GM12878 (cell line): ENCODE measurements at regions of chr3 and their contacts with region 1.

Region 1: DNA sequence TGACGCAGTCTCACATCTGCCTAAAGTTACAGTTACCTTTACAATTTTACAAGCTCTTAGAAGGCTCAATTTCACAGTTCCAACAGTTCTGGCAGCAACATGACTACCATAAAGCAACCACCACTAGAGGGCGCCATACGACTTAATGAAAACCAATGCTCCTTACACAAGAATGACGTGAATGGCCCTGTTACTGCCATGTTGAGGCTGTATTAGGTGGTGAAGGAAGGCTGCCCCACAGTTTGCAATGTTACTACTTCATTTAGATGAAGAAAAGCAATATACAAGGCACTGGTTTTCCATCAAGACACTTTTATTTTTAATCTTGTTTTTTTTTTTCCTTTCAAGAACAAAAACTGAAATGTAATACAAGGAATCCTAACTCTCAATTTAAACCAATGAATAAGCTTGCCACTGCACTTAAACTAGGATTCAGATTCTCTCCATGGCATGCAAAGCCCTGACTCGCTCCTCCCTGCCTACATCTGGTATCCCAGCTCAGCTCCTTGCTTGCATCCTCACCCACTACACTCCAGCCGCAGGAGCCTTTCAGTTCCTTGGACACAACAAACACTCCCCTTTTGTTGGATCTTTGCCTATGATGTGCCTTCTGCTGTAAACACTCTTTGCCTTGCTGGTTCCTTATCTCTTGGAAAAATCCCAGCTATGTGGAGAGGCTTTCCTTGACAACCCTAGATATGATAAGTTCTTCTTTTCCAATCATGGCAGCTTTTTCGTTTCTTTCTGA is 270.7 kb downstream of the GBE1 start:
- DNase-seq: peak; percentile 36
- ATAC-seq: peak; percentile 99
- H3K4me3 ChIP-seq: no peak overlapping the region
- H3K27ac ChIP-seq: no peak overlapping the region
- H3K4me1 ChIP-seq: peaks cover 3% of the 10 kb centered on the region
- H3K27me3 ChIP-seq: no peaks in the 10 kb centered on the region
- CTCF ChIP-seq: peak; percentile 69 to 76 (median 73)
- EP300 ChIP-seq: no peak
- POLR2A ChIP-seq: no peak
- RAD21 ChIP-seq: peak; percentile 74

Region 2: GRCh38 chr3:81476692-81477091 is 14.0 kb before region 1 on chr3:
- CTCF ChIA-PET with region 1: interaction called, 30 read pairs
- POLR2A ChIA-PET with region 1: no interaction called
- RAD21 ChIA-PET with region 1: no interaction called
- SMC1A ChIA-PET with region 1: interaction called, 10 read pairs
- in situ Hi-C with region 1: no loop called
- intact Hi-C with region 1: no loop called
- DNase-seq: no peak
- ATAC-seq: no peak
- H3K4me3 ChIP-seq: no peak overlapping the region
- H3K27ac ChIP-seq: no peak overlapping the region
- H3K4me1 ChIP-seq: no peaks in the 10 kb centered on the region
- H3K27me3 ChIP-seq: no peaks in the 10 kb centered on the region
- CTCF ChIP-seq: no peak
- EP300 ChIP-seq: no peak
- POLR2A ChIP-seq: no peak
- RAD21 ChIP-seq: no peak

Region 3: DNA sequence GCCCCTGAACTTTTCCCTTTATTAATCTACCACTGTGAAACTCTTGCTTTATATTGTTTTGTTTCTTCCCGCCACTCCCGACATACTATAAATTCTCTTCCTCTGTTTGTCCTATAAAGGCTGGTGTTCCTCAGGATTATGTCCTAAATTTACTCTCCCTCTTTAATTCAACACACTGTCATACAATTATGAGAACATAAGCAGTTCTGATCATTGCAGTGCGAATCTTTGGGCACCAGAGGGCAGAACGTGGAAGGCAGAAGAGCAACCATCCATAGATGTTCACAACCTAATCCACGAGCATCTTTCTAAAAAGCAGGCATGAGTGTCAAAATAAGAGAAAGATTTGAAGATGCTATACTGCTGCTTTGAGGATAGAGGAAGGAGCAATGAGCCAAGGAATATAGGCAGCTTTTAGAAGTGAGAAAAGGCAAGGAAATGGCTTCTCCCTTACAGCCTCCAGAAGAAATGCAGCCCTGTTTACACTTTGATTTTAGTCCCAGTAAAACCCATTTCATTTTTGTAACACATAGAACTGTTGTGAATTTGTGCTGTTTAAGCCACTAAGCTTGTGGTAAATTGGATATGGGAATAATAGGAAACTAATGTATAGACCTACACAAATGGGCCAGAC is 91.4 kb after region 1 on chr3:
- CTCF ChIA-PET with region 1: interaction called, 12 read pairs
- POLR2A ChIA-PET with region 1: no interaction called
- RAD21 ChIA-PET with region 1: interaction called, 3 read pairs
- SMC1A ChIA-PET with region 1: no interaction called
- in situ Hi-C with region 1: no loop called
- intact Hi-C with region 1: no loop called
- DNase-seq: peak; percentile 4
- ATAC-seq: peak; percentile 91
- H3K4me3 ChIP-seq: no peak overlapping the region
- H3K27ac ChIP-seq: no peak overlapping the region
- H3K4me1 ChIP-seq: no peaks in the 10 kb centered on the region
- H3K27me3 ChIP-seq: no peaks in the 10 kb centered on the region
- CTCF ChIP-seq: peak; percentile 67 to 76 (median 75)
- EP300 ChIP-seq: no peak
- POLR2A ChIP-seq: no peak
- RAD21 ChIP-seq: peak; percentile 77

Region 4: GRCh38 chr3:81643721-81644120 is 153.0 kb after region 1 on chr3:
- CTCF ChIA-PET with region 1: interaction called, 4 read pairs
- POLR2A ChIA-PET with region 1: no interaction called
- RAD21 ChIA-PET with region 1: interaction called, 3 read pairs
- SMC1A ChIA-PET with region 1: interaction called, 3 read pairs
- in situ Hi-C with region 1: no loop called
- intact Hi-C with region 1: loop called (anchors 5 kb)
- DNase-seq: no peak
- ATAC-seq: peak; percentile 34; the same call in 1 of the 3 replicates
- H3K4me3 ChIP-seq: no peak overlapping the region
- H3K27ac ChIP-seq: no peak overlapping the region
- H3K4me1 ChIP-seq: no peaks in the 10 kb centered on the region
- H3K27me3 ChIP-seq: no peaks in the 10 kb centered on the region
- CTCF ChIP-seq: peak in 1 of 3 experiments; percentile 23; a peak in 1 of 6 replicates
- EP300 ChIP-seq: no peak
- POLR2A ChIP-seq: no peak
- RAD21 ChIP-seq: peak; percentile 32; the same call in 1 of the 2 replicates

Region 5: DNA sequence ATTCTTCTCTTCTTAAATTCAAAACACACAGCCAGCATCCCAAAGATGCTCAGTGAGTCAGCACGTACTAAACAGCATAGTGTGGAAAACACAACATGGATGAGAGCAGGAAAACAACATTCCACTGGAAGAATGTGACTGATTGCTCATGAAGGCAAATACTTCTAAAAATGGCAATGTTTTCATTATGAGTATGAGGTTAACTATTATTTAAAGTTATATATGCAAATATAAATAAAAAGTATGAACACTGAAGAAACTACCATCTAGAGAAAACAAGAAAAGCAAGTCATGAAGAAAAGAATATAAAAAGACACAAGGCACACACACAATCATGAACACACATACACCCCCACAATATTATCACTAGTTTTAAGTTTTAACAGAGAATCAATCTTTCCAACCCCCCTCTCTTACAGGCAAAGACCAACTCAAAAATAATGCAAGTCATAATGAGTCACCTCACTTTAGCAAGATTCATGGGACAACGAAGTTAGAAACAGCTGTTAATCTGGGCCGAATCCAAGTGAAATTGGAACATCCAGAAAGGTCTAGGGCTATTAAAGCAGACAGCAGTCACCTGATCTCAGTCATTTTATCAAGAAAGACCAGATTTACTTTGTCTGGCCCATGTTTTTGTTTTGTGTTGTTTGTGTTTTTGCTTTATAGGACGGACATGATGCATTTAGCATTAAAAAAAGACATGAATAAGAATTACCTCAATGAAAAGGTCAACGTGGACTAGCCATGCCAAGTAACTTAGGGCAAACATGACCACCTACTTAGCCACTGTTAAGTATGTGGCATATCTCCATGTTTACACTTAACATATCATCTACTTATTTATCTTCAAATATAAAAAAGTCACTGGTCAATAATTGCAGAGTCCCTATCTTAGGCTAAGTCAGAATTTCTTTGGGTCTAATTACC is 252.6 kb after region 1 on chr3:
- CTCF ChIA-PET with region 1: no interaction called
- POLR2A ChIA-PET with region 1: no interaction called
- RAD21 ChIA-PET with region 1: no interaction called
- SMC1A ChIA-PET with region 1: no interaction called
- in situ Hi-C with region 1: no loop called
- intact Hi-C with region 1: no loop called
- DNase-seq: no peak
- ATAC-seq: no peak
- H3K4me3 ChIP-seq: no peak overlapping the region
- H3K27ac ChIP-seq: no peak overlapping the region
- H3K4me1 ChIP-seq: 0 out of 2 replicates have a peak, but pooled peaks cover 2% of the 10 kb centered on the region
- H3K27me3 ChIP-seq: no peaks in the 10 kb centered on the region
- CTCF ChIP-seq: no peak
- EP300 ChIP-seq: no peak
- POLR2A ChIP-seq: no peak
- RAD21 ChIP-seq: no peak

Region 6: DNA sequence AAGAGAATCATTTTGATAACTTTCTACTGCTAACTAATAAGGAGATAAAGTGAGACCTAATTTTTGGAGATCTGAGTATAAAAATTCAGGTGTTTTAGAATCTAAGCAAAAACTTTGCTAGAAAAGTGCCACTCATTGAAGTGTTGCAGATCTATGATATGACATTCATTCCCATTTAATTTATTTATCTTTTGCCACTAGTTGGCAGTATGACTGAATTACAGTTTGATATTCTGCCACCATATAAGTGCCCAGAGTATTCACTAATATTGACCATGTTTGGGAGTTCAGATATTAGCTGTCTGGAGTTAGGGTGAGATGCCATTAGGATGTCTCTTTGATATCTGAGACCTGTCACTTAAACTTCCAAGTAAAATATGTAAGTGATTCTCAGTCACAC is 522.1 kb after region 1 on chr3:
- CTCF ChIA-PET with region 1: no interaction called
- POLR2A ChIA-PET with region 1: no interaction called
- RAD21 ChIA-PET with region 1: no interaction called
- SMC1A ChIA-PET with region 1: no interaction called
- in situ Hi-C with region 1: no loop called
- intact Hi-C with region 1: no loop called
- DNase-seq: no peak
- ATAC-seq: no peak
- H3K4me3 ChIP-seq: no peak overlapping the region
- H3K27ac ChIP-seq: no peak overlapping the region
- H3K4me1 ChIP-seq: no peaks in the 10 kb centered on the region
- H3K27me3 ChIP-seq: no peaks in the 10 kb centered on the region
- CTCF ChIP-seq: peak; percentile 3 to 15 (median 13); a peak in 3 of 6 replicates
- EP300 ChIP-seq: no peak
- POLR2A ChIP-seq: no peak
- RAD21 ChIP-seq: no peak